ENCODE measurements at regions of chr21 and their contacts with region 1.

Region 1: DNA sequence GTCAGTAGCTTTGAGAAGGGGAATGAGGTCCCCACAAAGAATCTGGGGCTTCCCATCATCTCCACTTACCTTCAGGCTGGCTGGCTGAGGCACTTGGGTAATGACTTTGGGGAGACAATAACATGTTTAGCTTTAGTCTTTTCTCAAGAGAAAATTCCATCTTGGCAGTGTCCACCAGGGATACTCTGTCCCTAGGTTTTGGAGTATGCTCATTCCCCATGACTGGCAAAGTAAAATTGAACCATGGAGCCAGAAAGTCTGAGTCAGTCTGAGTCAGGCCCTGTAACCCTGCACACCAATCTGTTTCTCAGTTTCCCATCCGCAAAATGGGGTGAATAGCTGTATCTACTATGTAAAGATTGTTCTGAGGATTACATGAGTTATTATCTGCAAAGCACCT is 28.2 kb downstream of the RUNX1 start:
- DNase-seq: peak; percentile 52
- H3K4me3 Mint-ChIP-seq: no peak overlapping the region
- H3K27ac Mint-ChIP-seq: peak overlapping the region; percentile 80
- H3K4me1 Mint-ChIP-seq: peaks cover 89% of the 10 kb centered on the region
- H3K27me3 Mint-ChIP-seq: no peaks in the 10 kb centered on the region

Region 2: GRCh38 chr21:34933609-34934335 is 87.1 kb before region 1 on chr21:
- CTCF ChIA-PET with region 1: interaction called, 3 read pairs
- intact Hi-C with region 1: loop called (anchors 1 kb)
- DNase-seq: peak; percentile 51
- H3K4me3 Mint-ChIP-seq: peak overlapping the region; percentile 77
- H3K27ac Mint-ChIP-seq: peak overlapping the region; percentile 97
- H3K4me1 Mint-ChIP-seq: peaks cover 80% of the 10 kb centered on the region
- H3K27me3 Mint-ChIP-seq: no peaks in the 10 kb centered on the region

Measured in activated naive CD4-positive, alpha-beta T cell treated with anti-CD3 and anti-CD28 coated beads for 36 hours (primary cell).